ENCODE measurements at regions of chr7 and their contacts with region 1.

Region 1: DNA sequence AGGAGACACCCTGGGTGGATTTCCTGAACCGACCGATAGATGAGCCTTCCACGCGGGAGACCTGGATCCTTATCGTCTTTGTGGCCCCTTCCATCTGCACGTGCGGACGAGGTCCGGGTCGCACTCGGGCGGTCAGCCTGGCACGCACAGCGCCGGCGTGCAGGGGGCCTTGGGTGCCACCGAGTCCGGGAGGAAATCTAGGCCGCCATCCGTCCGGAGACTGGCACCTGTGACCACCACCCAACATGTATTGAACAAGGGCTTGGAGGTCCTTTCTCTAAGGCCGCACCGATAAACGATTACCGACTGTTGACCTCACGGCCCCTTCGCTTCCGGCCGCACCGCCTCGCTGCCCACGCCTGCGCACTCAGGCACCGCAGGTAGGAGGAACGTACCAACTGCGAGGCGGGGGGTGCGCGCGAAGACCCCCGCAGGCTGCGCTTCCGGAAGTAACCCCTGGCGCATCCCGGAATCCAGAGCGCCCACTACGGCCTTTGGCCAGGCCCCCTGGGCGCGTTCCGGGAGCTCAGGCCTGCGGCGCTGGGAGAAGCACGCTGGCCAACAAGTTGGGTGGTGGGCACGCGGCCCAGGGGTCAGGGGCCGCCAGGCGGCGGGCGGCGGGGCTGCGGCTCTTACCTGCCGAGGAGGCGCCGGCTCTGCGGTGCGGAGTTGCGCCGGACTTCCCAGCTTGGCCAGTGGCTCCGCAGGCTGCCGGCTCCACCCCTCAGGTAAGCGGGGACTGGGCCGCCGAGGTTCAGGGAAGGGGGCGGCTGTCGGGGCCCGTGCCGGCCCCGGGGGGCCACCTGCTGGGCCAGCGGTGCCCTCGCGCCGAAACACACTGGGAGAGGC is at the starts of genes ACTR3C and LRRC61:
- DNase-seq: peak; percentile 79
- ATAC-seq: peak; percentile 78
- H3K4me3 ChIP-seq: peak within 1 kb of the TSS; percentile 75 to 94 (median 88)
- H3K4me3 Mint-ChIP-seq: peak within 1 kb of the TSS; percentile 99
- H3K27ac ChIP-seq: peak within 1 kb of the TSS; percentile 82 to 88
- H3K27ac Mint-ChIP-seq: peak within 1 kb of the TSS; percentile 98
- H3K4me1 ChIP-seq: peaks cover 11 to 34% of the 10 kb centered on the region in 2 donors
- H3K4me1 Mint-ChIP-seq: peaks cover 47% of the 10 kb centered on the region
- H3K27me3 ChIP-seq: no peaks in the 10 kb centered on the region
- H3K27me3 Mint-ChIP-seq: no peaks in the 10 kb centered on the region
- CTCF ChIP-seq: no peak
- total RNA-seq, gene ACTR3C: 20.7 TPM in 2 replicates
- total RNA-seq, gene LRRC61: 12.8 and 15.5 TPM in 2 replicates

Region 2: GRCh38 chr7:150378853-150379440 is 55.9 kb after region 1 on chr7 and contains the start of gene ZNF775:
- CTCF ChIA-PET with region 1: no interaction called
- POLR2A ChIA-PET with region 1: no interaction called
- intact Hi-C with region 1: loop called (anchors 5 kb)
- DNase-seq: peak; percentile 93
- ATAC-seq: peak; percentile 91
- H3K4me3 ChIP-seq: peak within 1 kb of the TSS; percentile 45 to 91 (median 77)
- H3K4me3 Mint-ChIP-seq: peak within 1 kb of the TSS; percentile 96
- H3K27ac ChIP-seq: peak within 1 kb of the TSS; percentile 84 to 85
- H3K27ac Mint-ChIP-seq: peak within 1 kb of the TSS; percentile 90
- H3K4me1 ChIP-seq: peaks cover 22 to 59% of the 10 kb centered on the region in 2 donors
- H3K4me1 Mint-ChIP-seq: peaks cover 71% of the 10 kb centered on the region
- H3K27me3 ChIP-seq: no peaks in the 10 kb centered on the region
- H3K27me3 Mint-ChIP-seq: no peaks in the 10 kb centered on the region
- CTCF ChIP-seq: peak; percentile 14
- total RNA-seq, gene ZNF775: 12.1 and 12.5 TPM in 2 replicates